ENCODE measurements at regions of chr2 and their contacts with region 1.

Region 1: DNA sequence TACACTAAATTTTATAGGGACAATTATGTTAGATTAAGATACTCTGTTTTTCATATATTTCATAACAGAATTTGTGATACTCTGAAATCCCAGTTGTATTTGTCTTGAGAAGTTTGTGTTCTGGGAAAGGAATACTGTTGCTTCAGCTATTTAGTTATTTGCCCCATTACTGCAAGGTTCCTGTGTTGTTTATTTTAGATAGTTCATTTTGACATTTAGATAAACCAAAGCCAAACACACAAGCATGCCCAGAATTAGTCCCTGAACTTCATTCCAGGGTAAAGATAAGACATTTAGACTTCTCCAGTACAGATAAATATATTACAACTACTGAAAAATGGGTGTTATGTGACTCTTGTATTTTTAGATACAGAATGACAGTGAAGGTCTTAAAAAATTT is 74.7 kb downstream of the BMPR2 start:
- ATAC-seq: no peak
- H3K4me3 ChIP-seq: no peak overlapping the region
- H3K27ac ChIP-seq: no peak overlapping the region
- H3K4me1 ChIP-seq: no peaks in the 10 kb centered on the region

Region 2: DNA sequence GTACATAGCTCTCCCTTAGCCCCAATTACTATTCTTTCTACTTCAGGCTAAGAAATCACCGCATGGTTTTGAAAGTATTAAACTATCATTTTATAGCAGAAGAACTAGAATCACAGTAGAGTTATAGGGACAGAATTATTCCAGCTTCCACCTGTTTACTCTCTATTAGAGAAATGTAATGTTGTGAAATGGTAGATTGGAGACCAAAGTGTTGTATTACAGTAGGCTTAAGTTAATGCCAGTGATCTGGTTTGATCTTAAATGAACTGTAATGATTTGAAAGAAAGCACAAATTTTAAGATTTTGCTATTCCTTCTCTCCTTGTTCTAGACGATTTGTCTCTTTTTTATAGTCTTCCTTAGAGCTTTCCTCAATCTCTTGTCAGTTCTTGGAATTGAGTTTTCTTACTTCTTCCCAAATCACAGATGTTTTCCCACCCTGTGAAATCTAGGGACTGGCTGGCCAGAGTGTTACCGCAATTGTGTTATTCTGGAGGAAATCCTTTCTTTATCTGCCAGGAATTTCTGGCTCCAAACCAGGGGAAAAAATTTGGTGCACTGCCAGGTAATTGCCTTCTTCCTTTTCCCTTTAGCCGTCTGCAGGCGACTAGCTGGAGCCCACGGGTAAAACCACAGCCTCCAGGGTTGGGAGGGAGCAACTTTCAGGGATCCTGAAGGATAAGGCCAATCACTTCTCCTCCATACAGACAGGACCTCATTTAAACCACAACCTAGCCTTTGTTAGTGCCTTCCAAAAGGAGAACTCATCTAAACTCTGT is 133.5 kb before region 1 on chr2:
- in situ Hi-C with region 1: loop called in 1 of 9 experiments (anchors 25 kb)
- ATAC-seq: peak in 4 of 8 experiments; percentile 50 to 89 (median 82)
- H3K4me3 ChIP-seq: no peak overlapping the region
- H3K27ac ChIP-seq: no peak overlapping the region
- H3K4me1 ChIP-seq: no peaks in the 10 kb centered on the region